Activated CD4-positive, alpha-beta T cell treated with anti-CD3 and anti-CD28 coated beads for 36 hours (primary cell): ENCODE measurements at regions of chr22 and their contacts with region 1.

Region 1: DNA sequence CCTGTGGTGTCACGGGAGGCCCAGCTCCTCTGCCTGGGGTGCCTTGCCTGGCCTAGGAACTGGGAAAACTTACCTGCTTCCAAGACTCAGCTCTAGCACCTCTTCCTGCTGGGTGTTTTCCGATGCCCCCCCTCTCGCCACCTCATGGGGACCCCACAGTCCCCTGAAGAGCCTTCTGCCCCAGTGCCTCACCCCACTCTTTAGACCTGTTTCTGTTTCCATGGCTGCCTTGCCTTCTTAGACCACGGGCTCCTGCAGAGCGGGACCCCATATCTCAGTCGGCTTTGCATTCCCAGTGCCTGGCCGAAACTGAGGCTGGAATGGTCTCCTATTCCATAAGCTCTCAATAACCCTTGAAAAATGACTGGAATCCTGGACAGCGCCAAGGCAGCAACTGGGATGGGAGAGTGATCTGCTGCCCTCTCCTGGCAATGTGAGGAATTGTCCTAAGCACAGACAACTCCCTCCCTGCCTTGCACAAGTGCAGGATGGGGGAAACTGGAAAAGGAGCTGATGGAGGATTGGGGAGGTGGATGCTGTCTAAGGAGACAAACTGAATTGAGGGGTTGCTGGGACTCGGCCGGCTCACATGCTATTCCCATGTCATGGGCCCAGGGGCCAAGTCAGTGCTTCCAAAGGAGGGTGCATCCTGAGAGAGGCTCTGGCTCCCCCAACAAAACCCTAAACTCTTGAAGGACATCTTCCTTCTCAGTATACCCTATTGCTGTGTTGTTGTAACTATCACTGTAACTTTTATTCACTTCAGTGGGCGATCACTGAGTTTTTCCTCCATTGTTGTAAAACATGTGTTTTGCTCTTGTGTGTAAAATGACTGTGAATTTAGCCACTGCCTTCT is 26.6 kb upstream of the IL17RA start:
- DNase-seq: peak; percentile 70
- ATAC-seq: peak; percentile 51
- H3K4me3 Mint-ChIP-seq: no peak overlapping the region
- H3K27ac Mint-ChIP-seq: no peak overlapping the region
- H3K4me1 Mint-ChIP-seq: peaks cover 2% of the 10 kb centered on the region
- H3K27me3 Mint-ChIP-seq: no peaks in the 10 kb centered on the region

Region 2: DNA sequence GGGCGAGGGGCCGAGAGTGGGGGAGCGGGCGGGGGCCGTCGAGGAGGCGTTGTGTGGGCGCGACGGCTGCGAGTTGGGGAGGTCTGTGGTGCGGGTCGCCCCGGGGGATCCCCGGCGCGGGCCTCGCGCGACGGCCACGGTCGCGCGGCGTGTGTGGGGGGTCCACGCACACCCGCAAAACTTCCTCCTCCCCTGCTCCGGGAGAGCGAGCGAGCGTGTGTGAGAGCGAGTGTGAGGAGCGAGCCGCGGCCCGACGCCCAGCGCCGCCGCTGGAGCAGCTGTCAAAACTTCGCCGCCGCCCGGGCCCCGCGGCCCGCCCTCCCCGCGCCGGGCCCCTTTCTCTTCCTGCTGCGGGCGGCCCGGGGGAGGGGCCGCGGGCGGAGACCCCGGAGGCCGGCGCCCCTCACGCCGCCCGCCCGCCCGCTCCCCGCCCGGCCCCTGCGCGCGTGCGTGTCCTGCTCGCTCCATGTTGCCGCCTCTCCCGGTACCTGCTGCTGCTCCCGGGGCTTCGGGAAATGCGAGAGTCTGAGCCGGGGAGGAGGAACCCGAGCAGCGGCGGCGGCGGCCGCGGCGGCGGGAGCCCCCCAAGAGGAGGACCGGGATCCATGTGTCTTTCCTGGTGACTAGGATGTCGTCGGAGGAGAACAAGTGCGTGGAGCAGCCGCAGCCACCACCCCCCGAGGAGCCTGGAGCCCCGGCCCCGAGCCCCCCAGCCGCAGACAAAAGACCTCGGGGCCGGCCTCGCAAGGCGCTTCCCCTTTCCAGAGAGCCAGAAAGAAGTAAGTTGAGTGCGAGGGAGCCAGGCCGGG is 456.5 kb before region 1 on chr22:
- CTCF ChIA-PET with region 1: no interaction called
- POLR2A ChIA-PET with region 1: no interaction called
- intact Hi-C with region 1: no loop called
- DNase-seq: peak; percentile 16
- ATAC-seq: peak; percentile 16
- H3K4me3 Mint-ChIP-seq: no peak overlapping the region
- H3K27ac Mint-ChIP-seq: no peak overlapping the region
- H3K4me1 Mint-ChIP-seq: peaks cover 10% of the 10 kb centered on the region
- H3K27me3 Mint-ChIP-seq: peaks cover 25% of the 10 kb centered on the region

Region 3: DNA sequence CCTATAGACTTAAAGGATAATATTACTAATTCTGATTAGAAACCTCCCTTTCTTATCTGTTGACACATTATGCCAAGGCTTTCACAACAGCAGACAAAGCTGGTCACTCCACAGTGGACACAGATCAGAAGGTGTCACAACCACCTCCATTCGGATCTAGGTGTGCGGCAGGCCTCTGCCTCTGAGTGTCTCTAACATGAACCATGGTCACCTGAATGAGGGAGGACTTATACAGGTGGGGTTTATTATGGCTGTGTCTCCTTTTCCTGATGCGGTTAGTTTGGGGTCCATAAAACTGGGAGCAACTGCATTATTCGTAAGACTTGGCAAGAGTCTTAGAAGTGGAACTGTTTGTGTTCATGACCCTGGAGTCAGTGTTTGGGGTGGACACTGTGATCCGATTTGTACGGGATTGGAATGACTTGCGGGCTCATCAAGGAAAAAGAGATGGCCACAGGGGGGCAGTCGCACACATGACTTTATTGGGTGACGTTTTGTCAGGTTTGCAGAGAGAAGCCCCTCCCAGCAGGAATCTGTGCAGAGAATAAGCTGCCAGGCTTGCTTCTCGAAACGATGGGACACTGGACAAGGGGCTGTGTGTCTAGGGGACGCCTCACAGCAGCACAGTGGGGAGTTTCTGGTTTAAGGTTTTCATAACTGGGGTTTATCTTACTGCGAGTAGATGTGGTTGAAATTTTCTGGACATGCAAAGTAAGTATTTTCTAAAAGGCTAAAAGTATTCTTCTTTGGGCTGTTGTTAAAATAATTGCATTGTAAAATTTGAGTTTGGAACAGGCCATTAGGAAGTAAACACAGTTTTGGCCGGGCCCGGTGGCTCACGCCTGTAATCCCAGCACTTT is 140.8 kb before region 1 on chr22:
- CTCF ChIA-PET with region 1: interaction called, 17 read pairs
- POLR2A ChIA-PET with region 1: no interaction called
- intact Hi-C with region 1: loop called (anchors 1 kb)
- DNase-seq: peak; percentile 80
- ATAC-seq: peak; percentile 44
- H3K4me3 Mint-ChIP-seq: no peak overlapping the region
- H3K27ac Mint-ChIP-seq: no peak overlapping the region
- H3K4me1 Mint-ChIP-seq: peaks cover 2% of the 10 kb centered on the region
- H3K27me3 Mint-ChIP-seq: peaks cover 20% of the 10 kb centered on the region

Region 4: DNA sequence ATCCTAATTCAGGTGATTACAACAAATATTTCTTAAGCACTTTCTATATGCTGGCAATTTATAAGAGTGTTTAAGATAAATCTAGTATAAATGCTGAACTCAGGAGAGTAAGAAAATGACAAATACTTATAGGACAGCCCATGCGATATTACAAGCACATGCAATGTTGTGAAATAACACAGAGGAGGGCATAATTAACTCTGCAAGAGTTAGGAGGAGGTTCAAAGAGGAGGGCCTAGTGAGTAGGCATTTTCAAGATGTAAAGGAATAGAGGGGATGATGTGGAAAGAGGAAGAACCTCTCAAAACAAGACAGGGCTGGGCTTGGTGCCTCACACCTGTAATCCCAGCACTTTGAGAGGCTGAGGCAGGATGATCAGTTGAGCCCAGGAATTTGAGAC is 10.5 kb before region 1 on chr22:
- CTCF ChIA-PET with region 1: interaction called, 10 read pairs
- POLR2A ChIA-PET with region 1: no interaction called
- intact Hi-C with region 1: no loop called
- DNase-seq: no peak
- ATAC-seq: no peak
- H3K4me3 Mint-ChIP-seq: no peak overlapping the region
- H3K27ac Mint-ChIP-seq: no peak overlapping the region
- H3K4me1 Mint-ChIP-seq: peaks cover 10% of the 10 kb centered on the region
- H3K27me3 Mint-ChIP-seq: no peaks in the 10 kb centered on the region

Region 5: DNA sequence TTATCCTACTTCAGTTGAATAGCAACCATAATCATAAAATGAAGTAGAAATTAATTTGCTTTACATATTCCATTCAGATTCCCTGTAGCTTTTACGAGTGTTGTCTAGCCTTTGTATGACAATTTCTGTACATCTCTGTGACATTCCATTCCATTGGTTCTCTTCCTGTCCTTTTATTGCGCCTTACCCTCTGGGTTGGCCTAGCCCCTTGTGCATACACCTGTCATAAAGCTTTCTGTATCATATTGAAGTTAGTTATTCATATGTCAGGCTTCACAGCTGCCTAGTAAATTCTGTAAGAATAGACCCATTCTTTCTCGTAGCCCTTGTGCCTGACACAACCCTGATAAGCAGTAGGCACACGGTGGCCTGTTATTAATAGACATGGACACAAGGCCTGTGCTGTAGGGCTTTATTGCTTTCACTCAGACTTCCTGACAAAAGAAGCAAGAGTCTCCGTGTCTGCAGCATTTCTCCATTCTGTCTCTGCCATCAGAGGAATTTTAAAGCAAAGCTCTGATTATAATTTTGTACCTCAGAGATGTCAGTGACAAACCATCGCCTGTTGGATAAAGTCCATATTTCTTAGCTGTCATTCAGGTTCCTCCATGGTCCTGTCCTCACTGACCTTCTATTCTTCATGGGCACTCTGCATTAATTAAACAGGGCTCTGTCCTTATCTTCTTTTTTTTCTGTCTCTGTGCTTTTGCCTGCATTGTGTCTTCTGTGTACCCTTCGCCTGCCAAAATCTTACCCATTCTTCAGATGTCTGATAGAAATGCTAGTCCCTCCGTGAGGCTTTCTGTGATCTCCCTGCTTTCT is 666.7 kb after region 1 on chr22:
- CTCF ChIA-PET with region 1: no interaction called
- POLR2A ChIA-PET with region 1: no interaction called
- intact Hi-C with region 1: no loop called
- DNase-seq: no peak
- ATAC-seq: no peak
- H3K4me3 Mint-ChIP-seq: no peak overlapping the region
- H3K27ac Mint-ChIP-seq: no peak overlapping the region
- H3K4me1 Mint-ChIP-seq: peaks cover 10% of the 10 kb centered on the region
- H3K27me3 Mint-ChIP-seq: no peaks in the 10 kb centered on the region